ENCODE measurements at regions of chr7 and their contacts with region 1.

Region 1: DNA sequence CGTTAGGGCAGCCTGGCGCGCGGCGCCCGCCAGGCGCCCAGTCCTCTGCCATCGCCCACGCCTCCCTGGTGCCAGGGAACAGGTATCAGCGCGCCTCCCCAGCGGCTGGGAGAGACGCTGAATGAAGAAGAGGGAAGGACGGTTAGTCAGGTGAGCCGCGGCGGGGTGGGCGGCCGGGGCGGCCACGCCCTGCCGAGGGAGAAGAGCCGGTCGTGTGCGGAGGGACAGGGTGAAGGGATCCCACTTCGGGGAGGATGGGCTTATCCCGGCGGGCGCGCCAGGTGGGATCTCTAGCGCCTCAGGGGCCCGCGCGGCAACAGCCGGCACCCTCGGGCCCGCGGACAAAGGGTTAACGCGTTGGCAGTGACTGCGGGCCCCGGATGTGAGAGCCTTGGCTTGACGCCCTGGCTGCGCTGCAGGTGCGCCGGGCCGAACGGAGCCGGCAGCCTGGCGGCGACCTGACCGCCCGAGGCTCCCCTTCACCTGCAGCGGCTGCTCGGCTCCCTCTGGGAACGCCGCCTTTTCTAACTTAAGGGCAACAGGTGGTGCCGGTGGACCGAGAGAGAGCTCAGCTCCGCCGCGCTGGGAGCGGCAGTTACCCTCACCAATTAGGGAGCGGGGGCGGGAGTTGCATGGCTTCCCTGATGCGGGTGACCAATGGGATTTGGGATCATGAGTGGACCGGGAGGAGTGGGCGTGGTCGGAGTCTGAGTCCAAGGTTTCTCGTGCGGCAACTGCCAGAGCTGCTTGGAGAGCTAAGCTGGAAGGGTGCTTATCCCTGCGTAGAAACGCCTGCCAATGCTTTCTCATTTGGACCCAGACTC is at the start of gene ARL4A:
- DNase-seq: peak; percentile 98
- ATAC-seq: peak; percentile 96
- H3K4me3 ChIP-seq: peak within 1 kb of the TSS; percentile 86 to 95 (median 92)
- H3K27ac ChIP-seq: peak within 1 kb of the TSS; percentile 92
- H3K4me1 ChIP-seq: peaks cover 42% of the 10 kb centered on the region
- H3K27me3 ChIP-seq: no peaks in the 10 kb centered on the region
- CTCF ChIP-seq: peak; percentile 91
- EP300 ChIP-seq: no peak; a peak in 1 of 4 replicates
- POLR2A ChIP-seq: peak; percentile 97 to 98
- RAD21 ChIP-seq: peak; percentile 79
- total RNA-seq, gene ARL4A: 25.6 and 29.3 TPM in 2 replicates

Region 2: DNA sequence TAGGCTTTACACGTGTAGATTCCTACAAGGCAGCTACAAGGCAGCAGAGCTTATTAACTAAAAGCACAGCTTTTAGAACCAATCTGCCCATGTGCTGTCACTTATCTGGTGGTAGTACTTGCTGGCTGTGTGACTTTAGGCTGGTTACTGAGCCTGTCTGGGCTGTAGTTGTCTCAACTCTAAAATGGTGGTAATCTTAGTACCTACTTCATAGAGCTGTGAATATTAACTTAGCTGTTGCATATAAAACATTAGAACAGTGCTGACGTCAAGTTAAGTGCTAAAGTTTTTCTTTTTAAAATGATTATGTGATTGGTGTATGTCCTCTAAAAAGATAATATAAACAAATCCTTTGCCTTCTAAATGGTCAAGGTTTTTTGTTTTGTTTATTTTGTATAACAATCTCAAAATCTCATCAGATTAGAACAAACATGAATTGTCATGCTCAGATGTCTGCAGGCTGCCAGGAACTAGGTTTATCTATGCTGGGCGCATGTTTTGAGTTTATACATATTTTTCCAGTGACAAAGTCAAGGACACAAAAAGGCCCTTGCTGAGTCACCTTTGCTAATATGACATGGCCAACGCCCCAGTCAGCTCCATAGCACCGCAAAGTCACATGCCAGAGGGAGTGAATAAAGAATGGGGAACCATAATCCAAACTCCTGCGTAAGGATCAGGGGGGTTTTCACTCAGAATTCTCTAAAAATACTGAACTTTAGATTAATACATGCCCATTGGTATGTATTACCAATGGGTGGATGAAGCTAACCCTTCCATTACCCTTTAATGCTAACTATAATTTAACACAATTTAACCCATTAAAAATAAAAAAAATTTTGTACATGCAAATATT is 39.5 kb before region 1 on chr7:
- CTCF ChIA-PET with region 1: no interaction called
- POLR2A ChIA-PET with region 1: interaction called, 11 read pairs
- in situ Hi-C with region 1: loop called (anchors 5 kb)
- intact Hi-C with region 1: no loop called
- DNase-seq: peak; percentile 92
- ATAC-seq: peak; percentile 87
- H3K4me3 ChIP-seq: no peak overlapping the region
- H3K27ac ChIP-seq: peak overlapping the region; percentile 59
- H3K4me1 ChIP-seq: peaks cover 49% of the 10 kb centered on the region
- H3K27me3 ChIP-seq: no peaks in the 10 kb centered on the region
- CTCF ChIP-seq: no peak
- EP300 ChIP-seq: peak in 1 of 2 experiments; percentile 84; a peak in 1 of 4 replicates
- POLR2A ChIP-seq: no peak
- RAD21 ChIP-seq: no peak

Region 3: GRCh38 chr7:12754179-12754578 is 67.1 kb after region 1 on chr7:
- CTCF ChIA-PET with region 1: no interaction called
- POLR2A ChIA-PET with region 1: no interaction called
- in situ Hi-C with region 1: no loop called
- intact Hi-C with region 1: no loop called
- DNase-seq: no peak
- ATAC-seq: no peak
- H3K4me3 ChIP-seq: no peak overlapping the region
- H3K27ac ChIP-seq: no peak overlapping the region
- H3K4me1 ChIP-seq: peaks cover 9% of the 10 kb centered on the region
- H3K27me3 ChIP-seq: no peaks in the 10 kb centered on the region
- CTCF ChIP-seq: no peak
- EP300 ChIP-seq: no peak
- POLR2A ChIP-seq: no peak
- RAD21 ChIP-seq: no peak

Region 4: GRCh38 chr7:13017333-13017853 is 330.3 kb after region 1 on chr7:
- CTCF ChIA-PET with region 1: no interaction called
- POLR2A ChIA-PET with region 1: interaction called, 20 read pairs
- in situ Hi-C with region 1: no loop called
- intact Hi-C with region 1: loop called (anchors 1 kb)
- DNase-seq: peak; percentile 100
- ATAC-seq: peak; percentile 99
- H3K4me3 ChIP-seq: peak overlapping the region; percentile 3 to 48 (median 27); a peak in 3 of 6 replicates
- H3K27ac ChIP-seq: peak overlapping the region; percentile 97
- H3K4me1 ChIP-seq: peaks cover 65% of the 10 kb centered on the region
- H3K27me3 ChIP-seq: no peaks in the 10 kb centered on the region
- CTCF ChIP-seq: no peak
- EP300 ChIP-seq: peak; percentile 95 to 99
- POLR2A ChIP-seq: peak in 1 of 2 experiments; percentile 19; a peak in 1 of 4 replicates
- RAD21 ChIP-seq: peak; percentile 32; the same call in 1 of the 2 replicates

Region 5: GRCh38 chr7:13161125-13161524 is 474.0 kb after region 1 on chr7:
- CTCF ChIA-PET with region 1: no interaction called
- POLR2A ChIA-PET with region 1: no interaction called
- in situ Hi-C with region 1: no loop called
- intact Hi-C with region 1: loop called (anchors 1 kb)
- DNase-seq: no peak
- ATAC-seq: no peak
- H3K4me3 ChIP-seq: no peak overlapping the region
- H3K27ac ChIP-seq: no peak overlapping the region
- H3K4me1 ChIP-seq: no peaks in the 10 kb centered on the region
- H3K27me3 ChIP-seq: no peaks in the 10 kb centered on the region; a peak in 1 of 5 replicates
- CTCF ChIP-seq: no peak
- EP300 ChIP-seq: no peak
- POLR2A ChIP-seq: no peak
- RAD21 ChIP-seq: no peak

Region 6: DNA sequence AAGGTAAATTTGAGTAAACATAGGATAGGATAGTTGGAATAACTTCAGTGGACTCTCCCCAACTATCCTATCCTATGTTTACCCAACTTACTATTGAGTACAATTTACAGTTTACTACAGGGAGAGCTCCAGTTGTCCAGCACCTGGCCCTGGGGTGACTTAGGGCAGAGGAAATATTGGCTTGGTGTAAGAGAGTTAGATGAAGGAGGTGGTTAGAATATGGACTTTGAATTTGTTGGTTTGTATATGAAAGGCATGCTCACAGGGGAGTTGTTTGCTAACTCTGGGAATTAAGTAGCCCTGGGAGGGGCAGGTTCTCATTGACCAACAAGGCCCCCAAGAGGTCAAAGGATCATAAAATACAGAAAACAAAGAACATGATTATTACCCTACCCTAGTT is 498.0 kb after region 1 on chr7:
- CTCF ChIA-PET with region 1: no interaction called
- POLR2A ChIA-PET with region 1: interaction called, 4 read pairs
- in situ Hi-C with region 1: no loop called
- intact Hi-C with region 1: loop called (anchors 1 kb)
- DNase-seq: peak; percentile 95
- ATAC-seq: peak; percentile 99
- H3K4me3 ChIP-seq: no peak overlapping the region; a peak in 1 of 6 replicates
- H3K27ac ChIP-seq: peak overlapping the region; percentile 62
- H3K4me1 ChIP-seq: peaks cover 32% of the 10 kb centered on the region
- H3K27me3 ChIP-seq: no peaks in the 10 kb centered on the region
- CTCF ChIP-seq: peak; percentile 20; the same call in 1 of the 2 replicates
- EP300 ChIP-seq: peak in 1 of 2 experiments; percentile 97; a peak in 2 of 4 replicates
- POLR2A ChIP-seq: no peak
- RAD21 ChIP-seq: no peak

Measured in HepG2 (cell line).